GM12878 (cell line): ENCODE measurements at regions of chr14 and their contacts with region 1.

Region 1: DNA sequence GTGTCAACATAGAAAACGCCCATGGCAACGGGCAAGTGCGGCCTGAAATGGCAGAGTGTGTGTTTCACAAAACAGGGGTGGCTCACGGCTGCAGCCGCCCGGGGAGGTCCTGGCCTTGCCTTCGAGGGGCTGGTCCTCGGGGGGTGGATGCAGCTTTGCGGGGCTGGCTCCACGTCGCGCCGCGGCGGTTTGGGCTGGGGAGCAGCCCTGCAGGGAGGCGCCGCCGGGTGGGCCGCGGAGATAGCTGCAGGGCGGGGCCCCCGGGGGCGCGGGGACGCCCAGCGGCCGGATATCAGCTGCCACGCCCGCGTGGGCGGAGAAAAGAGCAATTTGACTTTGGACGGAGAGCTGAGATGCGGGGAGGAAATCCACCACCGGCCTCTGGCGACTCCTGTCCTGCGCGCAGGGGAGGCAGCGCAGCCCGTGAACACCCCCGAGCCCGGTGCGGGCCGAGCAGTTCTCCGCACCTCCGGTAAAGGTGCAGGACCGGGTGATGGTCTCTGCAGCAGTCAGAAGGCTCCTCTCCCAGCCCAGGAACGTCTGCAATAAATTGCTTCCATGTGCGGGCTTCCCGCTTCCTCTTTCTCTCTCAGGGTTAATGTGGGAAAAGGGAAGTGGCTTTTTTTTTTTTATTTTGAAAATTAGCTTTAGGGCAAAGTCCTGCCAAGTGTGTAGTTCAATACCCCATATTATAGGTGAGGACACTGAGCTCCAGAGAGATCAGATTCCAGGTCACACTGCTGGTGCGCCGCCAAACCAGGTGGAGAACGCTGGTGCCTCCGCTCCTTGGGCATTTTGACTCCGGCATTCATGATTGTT is 110.5 kb downstream of the ARF6 start:
- DNase-seq: peak; percentile 60
- ATAC-seq: peak; percentile 52
- H3K4me3 ChIP-seq: peak overlapping the region; percentile 61
- H3K27ac ChIP-seq: peak overlapping the region; percentile 99
- H3K4me1 ChIP-seq: peaks cover 44% of the 10 kb centered on the region
- H3K27me3 ChIP-seq: no peaks in the 10 kb centered on the region
- CTCF ChIP-seq: peak; percentile 11 to 30 (median 19); a peak in 3 of 6 replicates
- EP300 ChIP-seq: peak in 1 of 2 experiments; percentile 5; a peak in 3 of 4 replicates
- POLR2A ChIP-seq: peak; percentile 85
- RAD21 ChIP-seq: 0 out of 2 replicates have a peak, but pooled peaks have one; percentile 31

Region 2: DNA sequence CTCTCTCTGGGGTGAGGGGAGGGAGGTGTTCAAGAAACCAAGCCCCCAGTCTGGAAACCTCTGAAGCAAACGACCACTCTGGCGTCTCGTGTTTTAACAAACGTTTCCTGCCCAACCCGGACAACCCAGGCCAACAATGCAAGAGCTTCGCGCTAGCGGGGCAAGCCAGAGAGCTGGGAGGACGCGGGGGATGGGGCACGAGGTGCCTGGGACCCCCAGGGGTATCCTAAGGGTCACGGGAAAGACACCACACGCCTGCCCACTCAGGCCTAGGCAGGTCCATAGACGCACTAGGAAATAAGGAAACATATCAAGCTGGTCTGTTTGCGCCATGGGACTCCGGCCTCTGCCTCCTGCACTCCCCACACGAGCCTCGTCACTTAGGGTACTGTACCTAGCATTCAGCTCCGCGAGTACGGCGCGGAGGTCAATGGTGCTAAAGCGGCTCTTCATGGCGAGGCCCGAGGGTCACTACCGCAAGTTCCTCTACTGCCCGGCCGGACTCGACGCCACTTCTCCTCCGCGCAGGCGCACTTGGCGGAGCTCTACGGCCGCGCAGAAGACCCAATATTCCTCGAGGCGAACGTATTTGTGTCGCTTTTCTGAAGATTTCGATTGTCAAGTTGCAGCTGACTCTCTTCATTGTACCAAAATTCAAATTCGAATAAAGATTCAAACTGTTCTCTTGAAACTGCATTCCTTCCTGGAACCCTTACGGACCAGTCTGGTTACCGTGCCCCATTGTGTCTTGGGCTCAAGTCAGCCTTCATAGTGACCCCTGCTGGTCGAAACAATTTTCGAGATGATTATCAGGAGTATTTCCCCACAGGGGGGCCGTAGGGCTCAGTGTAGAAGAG is 150.9 kb before region 1 on chr14 and contains the start of gene NEMF:
- CTCF ChIA-PET with region 1: interaction called, 7 read pairs
- POLR2A ChIA-PET with region 1: interaction called, 10 read pairs
- RAD21 ChIA-PET with region 1: interaction called, 12 read pairs
- SMC1A ChIA-PET with region 1: no interaction called
- in situ Hi-C with region 1: no loop called
- intact Hi-C with region 1: no loop called
- DNase-seq: peak; percentile 92
- ATAC-seq: peak; percentile 89
- H3K4me3 ChIP-seq: peak within 1 kb of the TSS; percentile 97
- H3K27ac ChIP-seq: peak within 1 kb of the TSS; percentile 88
- H3K4me1 ChIP-seq: peaks cover 1% of the 10 kb centered on the region; the same call in 1 of the 2 replicates
- H3K27me3 ChIP-seq: no peaks in the 10 kb centered on the region
- CTCF ChIP-seq: peak; percentile 67 to 95 (median 81)
- EP300 ChIP-seq: no peak
- POLR2A ChIP-seq: peak; percentile 89
- RAD21 ChIP-seq: peak; percentile 57
- polyA plus RNA-seq, gene NEMF: 36.8 to 62.6 TPM

Region 3: GRCh38 chr14:49879683-49880204 is 123.7 kb before region 1 on chr14:
- CTCF ChIA-PET with region 1: interaction called, 12 read pairs
- POLR2A ChIA-PET with region 1: interaction called, 8 read pairs
- RAD21 ChIA-PET with region 1: interaction called, 12 read pairs
- SMC1A ChIA-PET with region 1: interaction called, 9 read pairs
- in situ Hi-C with region 1: no loop called
- intact Hi-C with region 1: no loop called
- DNase-seq: no peak
- ATAC-seq: peak; percentile 98
- H3K4me3 ChIP-seq: no peak overlapping the region
- H3K27ac ChIP-seq: no peak overlapping the region
- H3K4me1 ChIP-seq: no peaks in the 10 kb centered on the region
- H3K27me3 ChIP-seq: no peaks in the 10 kb centered on the region
- CTCF ChIP-seq: peak; percentile 50 to 74 (median 72)
- EP300 ChIP-seq: no peak
- POLR2A ChIP-seq: no peak
- RAD21 ChIP-seq: peak; percentile 72

Region 4: GRCh38 chr14:49930720-49931119 is 72.7 kb before region 1 on chr14:
- CTCF ChIA-PET with region 1: no interaction called
- POLR2A ChIA-PET with region 1: interaction called, 4 read pairs
- RAD21 ChIA-PET with region 1: interaction called, 4 read pairs
- SMC1A ChIA-PET with region 1: interaction called, 6 read pairs
- in situ Hi-C with region 1: no loop called
- intact Hi-C with region 1: loop called (anchors 2 kb)
- DNase-seq: no peak
- ATAC-seq: peak; percentile 42
- H3K4me3 ChIP-seq: no peak overlapping the region
- H3K27ac ChIP-seq: no peak overlapping the region
- H3K4me1 ChIP-seq: peaks cover 16% of the 10 kb centered on the region
- H3K27me3 ChIP-seq: no peaks in the 10 kb centered on the region
- CTCF ChIP-seq: no peak
- EP300 ChIP-seq: no peak
- POLR2A ChIP-seq: no peak
- RAD21 ChIP-seq: no peak

Region 5: DNA sequence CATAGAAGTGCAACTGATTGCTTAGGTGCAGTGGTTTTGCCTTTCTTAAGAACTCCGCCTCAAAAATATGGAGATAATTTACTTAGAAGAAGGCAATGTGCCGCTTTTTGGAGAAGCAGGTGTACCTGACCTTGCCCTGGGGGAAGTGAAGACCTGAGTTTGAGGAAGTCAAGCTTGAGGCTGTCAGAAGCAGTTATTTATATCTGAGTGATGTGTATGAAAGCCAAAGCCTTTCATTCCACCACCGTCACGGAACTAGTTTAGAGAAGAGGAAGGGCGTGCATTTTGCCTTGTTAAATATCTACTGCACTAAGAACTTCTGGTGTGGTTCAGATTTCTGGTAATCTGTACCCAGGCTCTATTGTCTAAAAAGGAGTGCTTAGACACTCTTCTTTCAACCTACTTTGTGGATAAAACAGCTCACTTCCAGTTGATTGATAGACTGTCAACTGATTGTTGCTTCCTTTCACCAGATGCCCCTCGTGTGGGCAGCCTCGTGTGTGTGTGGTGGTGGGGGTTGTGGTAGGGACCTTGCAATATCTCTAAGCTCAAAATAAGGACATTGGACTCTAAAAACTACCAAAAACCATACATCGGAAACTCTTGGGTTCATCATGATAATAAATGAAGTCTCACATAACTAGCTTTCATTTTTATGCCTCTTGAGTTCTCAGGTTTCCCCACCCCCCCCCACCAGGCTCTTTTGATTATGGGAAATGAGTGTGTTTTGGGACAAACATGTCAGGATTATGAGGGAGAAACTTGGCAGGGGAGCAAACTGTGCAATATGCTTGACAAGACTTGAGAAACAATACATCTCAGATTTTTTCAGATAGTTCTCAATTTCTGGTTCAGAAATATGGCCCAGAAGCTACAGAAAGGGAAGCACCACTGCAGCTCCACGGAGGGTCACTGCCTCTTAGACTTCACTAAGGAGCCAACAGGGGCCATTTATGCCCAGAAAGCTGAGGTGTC is 32.0 kb before region 1 on chr14:
- CTCF ChIA-PET with region 1: interaction called, 41 read pairs
- POLR2A ChIA-PET with region 1: interaction called, 119 read pairs
- RAD21 ChIA-PET with region 1: interaction called, 107 read pairs
- SMC1A ChIA-PET with region 1: interaction called, 133 read pairs
- in situ Hi-C with region 1: no loop called
- intact Hi-C with region 1: loop called (anchors 1 kb)
- DNase-seq: peak; percentile 89
- ATAC-seq: peak; percentile 90
- H3K4me3 ChIP-seq: peak overlapping the region; percentile 49
- H3K27ac ChIP-seq: peak overlapping the region; percentile 100
- H3K4me1 ChIP-seq: peaks cover 39% of the 10 kb centered on the region
- H3K27me3 ChIP-seq: no peaks in the 10 kb centered on the region
- CTCF ChIP-seq: no peak
- EP300 ChIP-seq: peak; percentile 90 to 95
- POLR2A ChIP-seq: peak; percentile 24; the same call in 1 of the 2 replicates
- RAD21 ChIP-seq: no peak

Region 6: DNA sequence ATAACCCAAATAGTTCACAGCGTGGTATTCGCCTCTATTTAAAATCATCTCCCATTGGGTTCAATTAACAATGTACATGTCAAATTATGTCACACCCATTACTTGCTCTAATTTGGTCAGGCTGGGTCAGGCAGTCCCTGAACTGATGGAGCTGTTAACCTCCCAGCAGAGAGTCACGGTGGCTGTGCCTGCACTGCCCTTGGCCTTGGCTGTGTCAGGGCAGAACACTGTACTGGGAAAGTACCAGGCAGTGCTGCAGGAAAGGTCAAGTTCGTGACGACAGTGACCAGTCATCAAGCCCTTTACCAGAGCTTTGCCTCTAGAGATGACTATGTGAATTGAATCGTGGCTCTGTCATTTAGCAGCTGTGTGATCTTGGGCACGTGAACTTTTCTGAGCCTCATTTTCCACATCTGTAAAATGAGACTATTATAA is 10.5 kb before region 1 on chr14:
- CTCF ChIA-PET with region 1: interaction called, 4 read pairs
- POLR2A ChIA-PET with region 1: interaction called, 29 read pairs
- RAD21 ChIA-PET with region 1: interaction called, 11 read pairs
- SMC1A ChIA-PET with region 1: interaction called, 28 read pairs
- in situ Hi-C with region 1: no loop called
- intact Hi-C with region 1: no loop called
- DNase-seq: peak; percentile 87
- ATAC-seq: peak; percentile 95
- H3K4me3 ChIP-seq: no peak overlapping the region
- H3K27ac ChIP-seq: peak overlapping the region; percentile 29; the same call in 1 of the 2 replicates
- H3K4me1 ChIP-seq: peaks cover 12% of the 10 kb centered on the region
- H3K27me3 ChIP-seq: no peaks in the 10 kb centered on the region
- CTCF ChIP-seq: no peak
- EP300 ChIP-seq: peak; percentile 91; a peak in 3 of 4 replicates
- POLR2A ChIP-seq: peak; percentile 75
- RAD21 ChIP-seq: no peak

Region 7: GRCh38 chr14:50085570-50086320 is 82.3 kb after region 1 on chr14:
- CTCF ChIA-PET with region 1: interaction called, 11 read pairs
- POLR2A ChIA-PET with region 1: interaction called, 15 read pairs
- RAD21 ChIA-PET with region 1: interaction called, 52 read pairs
- SMC1A ChIA-PET with region 1: interaction called, 25 read pairs
- in situ Hi-C with region 1: no loop called
- intact Hi-C with region 1: loop called (anchors 1 kb)
- DNase-seq: peak; percentile 95
- ATAC-seq: peak; percentile 73
- H3K4me3 ChIP-seq: peak overlapping the region; percentile 38; the same call in 1 of the 2 replicates
- H3K27ac ChIP-seq: peak overlapping the region; percentile 95
- H3K4me1 ChIP-seq: peaks cover 68% of the 10 kb centered on the region
- H3K27me3 ChIP-seq: no peaks in the 10 kb centered on the region
- CTCF ChIP-seq: no peak
- EP300 ChIP-seq: peak; percentile 85 to 91
- POLR2A ChIP-seq: peak; percentile 48; the same call in 1 of the 2 replicates
- RAD21 ChIP-seq: no peak

Region 8: DNA sequence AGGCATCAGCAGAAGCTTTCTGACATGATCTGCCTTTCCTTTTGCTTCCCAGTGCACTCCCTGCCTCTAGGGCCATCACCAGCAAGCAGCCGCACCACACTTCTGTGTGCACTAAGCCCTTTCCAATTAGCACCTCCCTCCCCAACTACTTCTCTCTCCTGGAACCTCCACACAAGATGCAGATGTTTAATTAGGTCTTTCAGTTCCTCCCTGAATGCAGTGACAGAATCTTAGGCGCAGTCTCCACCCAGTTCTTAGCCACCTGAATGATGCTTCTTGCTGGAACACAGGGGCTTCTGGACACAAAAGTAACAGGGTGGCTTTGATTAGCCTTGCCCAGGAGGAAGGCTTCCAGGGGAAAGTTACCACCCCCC is 794.6 kb after region 1 on chr14:
- CTCF ChIA-PET with region 1: no interaction called
- POLR2A ChIA-PET with region 1: no interaction called
- RAD21 ChIA-PET with region 1: no interaction called
- SMC1A ChIA-PET with region 1: no interaction called
- in situ Hi-C with region 1: no loop called
- intact Hi-C with region 1: no loop called
- DNase-seq: peak; percentile 42
- ATAC-seq: peak; percentile 98
- H3K4me3 ChIP-seq: no peak overlapping the region; the same call in 1 of the 2 replicates
- H3K27ac ChIP-seq: peak overlapping the region; percentile 36
- H3K4me1 ChIP-seq: peaks cover 55% of the 10 kb centered on the region
- H3K27me3 ChIP-seq: no peaks in the 10 kb centered on the region
- CTCF ChIP-seq: no peak
- EP300 ChIP-seq: 0 out of 4 replicates have a peak, but pooled peaks have one; percentile 17 to 44
- POLR2A ChIP-seq: 0 out of 2 replicates have a peak, but pooled peaks have one; percentile 28
- RAD21 ChIP-seq: no peak